Spleen (tissue), 13 donors: ENCODE measurements at regions of chr2 and their contacts with region 1.

Region 1: GRCh38 chr2:232142049-232142448 is 180.5 kb downstream of the DIS3L2 start:
- DNase-seq: no peak
- H3K4me3 ChIP-seq: no peak overlapping the region
- H3K27ac ChIP-seq: no peak overlapping the region
- H3K4me1 ChIP-seq: peaks cover 0 to 27% (median 15%) of the 10 kb centered on the region in 6 donors
- H3K27me3 ChIP-seq: no peaks in the 10 kb centered on the region
- CTCF ChIP-seq: peak in 9 of 11 experiments; percentile 16 to 65 (median 51)
- POLR2A ChIP-seq: no peak

Region 2: GRCh38 chr2:231925303-231926179 is 216.5 kb before region 1 on chr2:
- intact Hi-C with region 1: loop called (anchors 5 kb)
- DNase-seq: peak; percentile 93
- H3K4me3 ChIP-seq: peak overlapping the region; percentile 16 to 71 (median 43)
- H3K27ac ChIP-seq: no peak overlapping the region
- H3K4me1 ChIP-seq: peaks cover 20 to 32% (median 27%) of the 10 kb centered on the region in 6 donors
- H3K27me3 ChIP-seq: peaks cover 0 to 97% (median 51%) of the 10 kb centered on the region in 7 donors
- CTCF ChIP-seq: peak; percentile 29 to 97 (median 94)
- POLR2A ChIP-seq: no peak